HCT116 (cell line): ENCODE measurements at regions of chr5 and their contacts with region 1.

Region 1: GRCh38 chr5:130871346-130872086 is 293.5 kb downstream of the HINT1 start:
- DNase-seq: peak; percentile 29
- ATAC-seq: peak; percentile 85
- H3K4me3 ChIP-seq: no peak overlapping the region
- H3K27ac ChIP-seq: no peak overlapping the region
- H3K4me1 ChIP-seq: no peaks in the 10 kb centered on the region
- H3K27me3 ChIP-seq: no peaks in the 10 kb centered on the region
- CTCF ChIP-seq: peak; percentile 65 to 77 (median 76)
- POLR2A ChIP-seq: no peak
- RAD21 ChIP-seq: peak; percentile 64

Region 2: GRCh38 chr5:130912088-130912487 is 40.6 kb after region 1 on chr5:
- CTCF ChIA-PET with region 1: interaction called, 14 read pairs
- POLR2A ChIA-PET with region 1: no interaction called
- RAD21 ChIA-PET with region 1: no interaction called
- intact Hi-C with region 1: loop called (anchors 1 kb)
- DNase-seq: peak; percentile 19
- ATAC-seq: peak; percentile 71
- H3K4me3 ChIP-seq: no peak overlapping the region
- H3K27ac ChIP-seq: no peak overlapping the region
- H3K4me1 ChIP-seq: no peaks in the 10 kb centered on the region
- H3K27me3 ChIP-seq: no peaks in the 10 kb centered on the region
- CTCF ChIP-seq: peak; percentile 54 to 72 (median 63); a peak in 5 of 6 replicates
- POLR2A ChIP-seq: no peak
- RAD21 ChIP-seq: peak; percentile 85

Region 3: DNA sequence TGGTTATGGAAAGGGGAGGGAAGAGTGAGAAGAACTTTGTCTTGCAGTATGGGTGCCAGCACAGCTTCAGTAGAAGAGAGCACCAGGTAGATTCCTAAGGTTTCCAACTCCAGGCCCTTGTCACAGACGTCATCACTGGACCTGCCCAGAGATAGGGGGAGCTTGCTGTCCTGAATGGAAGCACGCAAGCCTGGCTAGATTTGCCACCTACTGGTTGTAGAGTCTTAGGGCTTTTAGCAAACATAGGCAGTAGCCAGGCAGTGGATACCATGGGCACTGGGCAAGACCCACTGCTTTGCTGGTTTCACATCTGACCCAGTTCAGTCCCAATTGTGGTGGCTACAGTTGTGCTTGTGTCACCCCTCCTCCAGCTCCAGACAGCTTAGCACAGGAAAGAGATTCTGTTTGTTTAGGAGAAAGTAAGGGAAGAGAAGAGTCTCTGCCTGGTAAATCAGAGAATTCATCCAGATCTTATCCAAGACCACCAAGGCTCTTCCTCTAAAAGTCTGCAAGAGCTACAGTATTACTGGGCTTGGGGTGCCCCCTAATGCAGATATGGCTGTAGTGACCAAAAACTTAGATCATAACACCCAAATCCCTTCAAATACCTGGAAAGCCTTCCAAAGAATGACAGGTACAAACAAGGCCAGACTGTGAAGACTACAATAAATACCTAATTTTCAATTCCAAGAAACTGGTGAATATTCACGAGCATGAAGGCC is 134.6 kb after region 1 on chr5:
- CTCF ChIA-PET with region 1: no interaction called
- POLR2A ChIA-PET with region 1: no interaction called
- RAD21 ChIA-PET with region 1: no interaction called
- intact Hi-C with region 1: loop called (anchors 2 kb)
- DNase-seq: peak; percentile 3
- ATAC-seq: peak; percentile 74
- H3K4me3 ChIP-seq: no peak overlapping the region
- H3K27ac ChIP-seq: no peak overlapping the region
- H3K4me1 ChIP-seq: no peaks in the 10 kb centered on the region
- H3K27me3 ChIP-seq: no peaks in the 10 kb centered on the region
- CTCF ChIP-seq: 0 out of 6 replicates have a peak, but pooled peaks of 1 of the 3 experiments have one; percentile 15
- POLR2A ChIP-seq: no peak
- RAD21 ChIP-seq: peak; percentile 28; the same call in 1 of the 2 replicates

Region 4: GRCh38 chr5:131417240-131417869 is 545.8 kb after region 1 on chr5:
- CTCF ChIA-PET with region 1: no interaction called
- POLR2A ChIA-PET with region 1: no interaction called
- RAD21 ChIA-PET with region 1: no interaction called
- intact Hi-C with region 1: loop called (anchors 2 kb)
- DNase-seq: peak; percentile 37
- ATAC-seq: peak; percentile 72
- H3K4me3 ChIP-seq: no peak overlapping the region
- H3K27ac ChIP-seq: no peak overlapping the region
- H3K4me1 ChIP-seq: no peaks in the 10 kb centered on the region
- H3K27me3 ChIP-seq: no peaks in the 10 kb centered on the region
- CTCF ChIP-seq: peak; percentile 60 to 91 (median 74); a peak in 5 of 6 replicates
- POLR2A ChIP-seq: no peak
- RAD21 ChIP-seq: peak; percentile 77